ENCODE measurements at regions of chr19 and their contacts with region 1.

Region 1: DNA sequence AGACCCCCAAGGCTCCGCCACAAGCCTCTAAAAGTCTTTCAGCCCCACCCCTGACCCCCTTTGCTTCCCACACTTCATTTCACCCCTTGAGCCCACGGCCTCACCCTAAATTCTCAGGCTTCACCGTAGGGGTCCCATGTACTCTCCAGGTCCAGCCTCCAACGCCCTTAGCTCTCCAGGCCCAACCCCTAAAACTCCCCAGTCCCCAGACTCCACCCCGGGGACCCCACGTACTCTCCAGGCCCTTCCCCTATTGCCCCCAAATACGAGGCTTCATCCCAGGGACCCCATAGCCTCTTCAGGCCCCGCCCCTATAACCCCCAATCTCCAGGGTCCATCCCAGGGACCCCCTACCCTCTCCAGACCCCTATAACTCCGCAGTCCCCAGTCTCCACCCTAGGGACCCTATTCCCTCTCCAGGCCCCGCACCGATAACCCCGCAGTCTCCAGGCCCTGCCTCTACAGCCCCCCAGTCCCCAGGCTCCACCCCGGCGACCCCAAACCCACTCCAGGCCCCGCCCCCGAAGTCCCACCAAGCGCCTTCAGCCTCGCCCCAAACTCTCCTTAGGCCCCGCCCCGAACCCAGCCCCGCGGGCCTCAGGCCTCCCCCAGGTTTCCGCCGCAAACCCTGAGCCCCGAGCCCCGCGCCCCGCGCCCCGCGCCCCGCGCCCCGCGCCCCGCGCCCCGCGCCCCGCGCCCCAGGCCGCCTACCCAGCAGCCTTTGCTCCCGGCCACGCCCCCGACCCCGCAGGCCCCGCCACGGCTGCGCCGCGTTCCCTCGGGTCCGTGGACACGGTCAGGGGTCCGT is 540 bp downstream of the MED16 start:
- DNase-seq: no peak
- H3K4me3 ChIP-seq: peak overlapping the region; percentile 74 to 93 (median 89)
- H3K27ac ChIP-seq: peak overlapping the region; percentile 96
- H3K4me1 ChIP-seq: no peaks in the 10 kb centered on the region
- H3K27me3 ChIP-seq: no peaks in the 10 kb centered on the region
- CTCF ChIP-seq: no peak
- POLR2A ChIP-seq: no peak

Region 2: DNA sequence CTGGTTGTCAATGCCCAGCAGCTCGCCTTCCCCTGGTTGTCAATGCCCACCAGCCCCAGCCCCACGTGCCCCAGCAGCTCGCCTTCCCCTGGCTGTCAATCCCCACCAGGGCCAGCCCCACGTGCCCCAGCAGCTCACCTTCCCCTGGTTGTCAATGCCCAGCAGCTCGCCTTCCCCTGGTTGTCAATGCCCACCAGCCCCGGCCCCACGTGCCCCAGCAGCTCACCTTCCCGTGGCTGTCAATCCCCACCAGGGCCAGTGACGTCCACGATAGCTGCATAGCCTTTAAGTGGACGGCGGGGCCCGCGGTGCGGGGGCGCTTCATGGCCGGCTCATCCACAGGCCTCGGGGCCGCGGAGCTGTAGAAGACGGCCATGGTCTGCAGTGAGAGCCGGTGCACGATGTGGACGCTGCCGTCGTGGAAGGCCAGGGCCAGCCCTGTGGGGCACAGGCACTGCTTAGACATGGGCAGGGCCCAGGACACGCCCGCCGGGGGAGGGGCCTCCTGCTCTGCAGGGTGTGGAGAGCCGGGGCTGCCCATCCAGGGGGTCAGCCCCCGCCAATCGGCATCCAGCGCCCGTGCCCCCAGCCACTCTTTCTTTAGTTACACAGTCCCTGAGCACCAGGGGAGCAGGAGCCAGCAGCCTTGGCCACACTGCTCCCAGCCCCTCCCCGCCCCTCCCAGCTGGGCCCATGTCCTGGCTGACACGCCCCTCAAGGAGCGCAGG is 12.6 kb before region 1 on chr19:
- intact Hi-C with region 1: no loop called
- DNase-seq: no peak
- H3K4me3 ChIP-seq: no peak overlapping the region
- H3K27ac ChIP-seq: no peak overlapping the region
- H3K4me1 ChIP-seq: no peaks in the 10 kb centered on the region
- H3K27me3 ChIP-seq: no peaks in the 10 kb centered on the region
- CTCF ChIP-seq: no peak
- POLR2A ChIP-seq: no peak

Region 3: GRCh38 chr19:1213391-1214286 is 321.2 kb after region 1 on chr19:
- intact Hi-C with region 1: loop called (anchors 10 kb)
- DNase-seq: peak in 1 of 2 donors; percentile 41
- H3K4me3 ChIP-seq: peak overlapping the region in 2 of 3 donors; percentile 13 to 52
- H3K27ac ChIP-seq: peak overlapping the region; percentile 69 to 94
- H3K4me1 ChIP-seq: peaks cover 16 to 36% of the 10 kb centered on the region in 2 donors
- H3K27me3 ChIP-seq: no peaks in the 10 kb centered on the region
- CTCF ChIP-seq: no peak
- POLR2A ChIP-seq: no peak

Region 4: DNA sequence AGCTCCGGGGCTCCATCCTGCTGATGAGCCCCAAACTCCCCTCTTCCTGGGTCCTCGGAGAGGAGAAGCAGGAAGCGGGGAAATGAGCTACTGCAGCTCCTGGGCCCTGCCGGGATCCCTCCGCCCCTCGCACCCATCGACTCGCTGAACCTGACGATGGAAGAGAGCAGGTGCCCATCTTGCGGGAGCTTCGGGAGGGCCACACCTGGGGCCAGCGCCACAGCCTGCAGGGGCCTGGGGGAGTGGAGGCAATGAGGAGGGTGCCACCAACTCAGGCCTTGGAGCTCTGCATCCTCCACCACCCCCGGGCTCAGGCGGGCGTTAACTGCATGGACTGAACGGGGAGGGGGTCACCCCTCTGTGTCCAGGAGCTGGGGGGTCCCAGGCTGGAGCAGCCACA is 751.6 kb after region 1 on chr19:
- intact Hi-C with region 1: loop called (anchors 5 kb)
- DNase-seq: no peak
- H3K4me3 ChIP-seq: no peak overlapping the region
- H3K27ac ChIP-seq: no peak overlapping the region
- H3K4me1 ChIP-seq: no peaks in the 10 kb centered on the region
- H3K27me3 ChIP-seq: no peaks in the 10 kb centered on the region
- CTCF ChIP-seq: no peak
- POLR2A ChIP-seq: no peak

Measured in breast epithelium (tissue), 4 donors.